ENCODE measurements at regions of chr20 and their contacts with region 1.

Region 1: DNA sequence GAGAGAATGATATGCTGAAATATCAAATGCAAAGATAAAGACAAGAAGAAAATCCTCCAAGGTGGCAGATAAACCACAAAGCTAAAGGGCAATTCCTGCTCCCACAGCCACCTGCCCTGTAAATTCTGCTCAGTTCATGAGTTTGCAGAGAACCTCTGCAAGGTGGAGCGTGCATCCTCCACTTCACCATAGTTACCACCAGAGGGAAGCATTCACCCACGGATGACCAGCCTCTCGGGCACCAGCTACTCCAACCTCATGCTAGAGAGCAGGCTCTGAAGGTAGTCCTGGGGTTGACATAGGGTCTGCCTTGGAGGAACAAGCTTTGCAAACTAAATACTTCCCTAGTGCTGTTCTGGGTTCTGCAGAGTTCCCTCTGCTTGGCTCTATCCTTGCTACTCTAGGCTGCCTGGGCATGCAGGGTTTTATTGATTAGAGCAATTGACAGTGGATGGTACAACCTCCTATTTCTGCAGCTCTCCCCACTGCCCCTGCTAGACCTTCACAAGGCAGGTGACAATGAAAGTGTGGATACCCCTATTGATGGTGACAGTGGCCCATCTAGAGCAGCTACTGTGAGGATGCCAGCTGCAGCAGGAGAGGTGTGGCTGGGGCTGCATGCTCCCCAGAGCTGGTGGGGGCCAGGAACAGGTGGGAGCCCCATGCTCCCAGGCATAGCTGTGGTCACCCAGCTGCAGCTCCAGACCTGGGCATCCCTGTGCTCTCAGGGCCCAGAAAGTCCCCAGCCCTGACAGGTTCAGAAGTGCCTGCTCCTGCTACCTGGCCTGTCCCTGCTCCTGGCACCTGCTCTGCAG is 51.1 kb downstream of the GGTLC1 start:
- DNase-seq: peak; percentile 3
- ATAC-seq: peak; percentile 89
- H3K4me3 ChIP-seq: no peak overlapping the region
- H3K27ac ChIP-seq: no peak overlapping the region
- H3K4me1 ChIP-seq: no peaks in the 10 kb centered on the region
- H3K27me3 ChIP-seq: no peaks in the 10 kb centered on the region
- CTCF ChIP-seq: peak; percentile 62 to 83 (median 69); a peak in 5 of 6 replicates
- EP300 ChIP-seq: no peak
- POLR2A ChIP-seq: no peak
- RAD21 ChIP-seq: peak; percentile 79

Region 2: GRCh38 chr20:23305098-23305497 is 632.4 kb before region 1 on chr20:
- CTCF ChIA-PET with region 1: no interaction called
- POLR2A ChIA-PET with region 1: no interaction called
- RAD21 ChIA-PET with region 1: no interaction called
- SMC1A ChIA-PET with region 1: no interaction called
- in situ Hi-C with region 1: no loop called
- intact Hi-C with region 1: no loop called
- DNase-seq: no peak
- ATAC-seq: no peak
- H3K4me3 ChIP-seq: no peak overlapping the region
- H3K27ac ChIP-seq: no peak overlapping the region
- H3K4me1 ChIP-seq: no peaks in the 10 kb centered on the region
- H3K27me3 ChIP-seq: no peaks in the 10 kb centered on the region
- CTCF ChIP-seq: no peak
- EP300 ChIP-seq: no peak
- POLR2A ChIP-seq: no peak
- RAD21 ChIP-seq: no peak

Region 3: GRCh38 chr20:23988561-23988960 is 51.1 kb after region 1 on chr20 and contains the start of gene GGTLC1:
- CTCF ChIA-PET with region 1: interaction called, 3 read pairs
- POLR2A ChIA-PET with region 1: no interaction called
- RAD21 ChIA-PET with region 1: no interaction called
- SMC1A ChIA-PET with region 1: no interaction called
- in situ Hi-C with region 1: no loop called
- intact Hi-C with region 1: loop called (anchors 5 kb)
- DNase-seq: no peak
- ATAC-seq: no peak
- H3K4me3 ChIP-seq: no peak within 1 kb of the TSS
- H3K27ac ChIP-seq: no peak within 1 kb of the TSS
- H3K4me1 ChIP-seq: no peaks in the 10 kb centered on the region
- H3K27me3 ChIP-seq: no peaks in the 10 kb centered on the region
- CTCF ChIP-seq: no peak
- EP300 ChIP-seq: no peak
- POLR2A ChIP-seq: no peak
- RAD21 ChIP-seq: no peak
- polyA plus RNA-seq, gene GGTLC1: not detected

Measured in GM12878 (cell line).